ENCODE measurements at regions of chr12 and their contacts with region 1.

Region 1: DNA sequence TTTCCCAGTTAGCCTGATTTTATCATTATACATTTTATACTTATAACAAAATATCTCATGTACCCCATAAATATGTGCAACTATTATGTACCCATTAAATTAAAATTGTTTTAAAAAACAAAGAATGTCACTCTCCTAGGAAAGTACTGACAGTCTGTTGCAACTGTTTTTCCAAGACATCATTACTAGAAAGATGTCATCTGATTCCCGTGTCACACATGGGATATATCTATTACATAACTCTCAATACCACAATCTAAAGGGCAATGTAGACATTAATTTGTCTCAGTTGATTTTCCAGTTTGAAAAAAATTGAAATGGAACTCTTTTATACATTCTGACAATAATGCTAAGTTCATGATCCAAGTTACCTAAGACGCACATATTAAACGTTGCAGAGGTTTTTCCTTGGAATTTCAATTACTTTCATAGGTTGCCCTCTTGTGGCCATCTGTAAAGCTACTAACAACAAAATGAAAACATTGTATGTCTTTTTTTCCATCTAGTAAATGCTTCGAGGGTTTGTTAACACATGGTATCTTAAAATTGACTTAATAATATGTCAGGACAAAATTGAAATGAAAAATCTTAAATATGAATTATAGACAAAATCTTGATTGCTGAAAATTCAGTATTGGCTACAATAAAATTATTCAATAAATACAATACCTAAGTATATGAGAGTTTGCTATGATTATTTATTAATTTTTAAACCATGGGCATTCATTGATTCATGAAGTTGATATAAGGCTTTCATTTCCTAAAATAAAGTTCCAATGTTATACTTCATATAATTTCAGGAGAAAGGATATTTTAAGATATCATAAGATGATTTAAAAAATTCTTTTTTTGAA is 131.6 kb downstream of the PPFIA2 start:
- DNase-seq: no peak
- ATAC-seq: no peak
- H3K4me3 ChIP-seq: no peak overlapping the region
- H3K4me3 Mint-ChIP-seq: no peak overlapping the region
- H3K27ac ChIP-seq: no peak overlapping the region
- H3K27ac Mint-ChIP-seq: no peak overlapping the region
- H3K4me1 ChIP-seq: no peaks in the 10 kb centered on the region
- H3K4me1 Mint-ChIP-seq: no peaks in the 10 kb centered on the region
- H3K27me3 ChIP-seq: no peaks in the 10 kb centered on the region
- H3K27me3 Mint-ChIP-seq: peaks cover 0 to 5% (median 3%) of the 10 kb centered on the region in 5 donors

Region 2: GRCh38 chr12:81314903-81315531 is 312.5 kb before region 1 on chr12:
- CTCF ChIA-PET with region 1: no interaction called
- POLR2A ChIA-PET with region 1: no interaction called
- intact Hi-C with region 1: no loop called
- DNase-seq: no peak
- ATAC-seq: no peak
- H3K4me3 ChIP-seq: no peak overlapping the region
- H3K4me3 Mint-ChIP-seq: no peak overlapping the region
- H3K27ac ChIP-seq: no peak overlapping the region
- H3K27ac Mint-ChIP-seq: no peak overlapping the region
- H3K4me1 ChIP-seq: no peaks in the 10 kb centered on the region
- H3K4me1 Mint-ChIP-seq: no peaks in the 10 kb centered on the region
- H3K27me3 ChIP-seq: no peaks in the 10 kb centered on the region
- H3K27me3 Mint-ChIP-seq: no peaks in the 10 kb centered on the region

Region 3: GRCh38 chr12:81450920-81451739 is 176.4 kb before region 1 on chr12:
- CTCF ChIA-PET with region 1: no interaction called
- POLR2A ChIA-PET with region 1: no interaction called
- intact Hi-C with region 1: loop called in 1 of 2 experiments (anchors 5 kb)
- DNase-seq: no peak
- ATAC-seq: no peak
- H3K4me3 ChIP-seq: no peak overlapping the region
- H3K4me3 Mint-ChIP-seq: no peak overlapping the region
- H3K27ac ChIP-seq: no peak overlapping the region
- H3K27ac Mint-ChIP-seq: no peak overlapping the region
- H3K4me1 ChIP-seq: no peaks in the 10 kb centered on the region
- H3K4me1 Mint-ChIP-seq: no peaks in the 10 kb centered on the region
- H3K27me3 ChIP-seq: no peaks in the 10 kb centered on the region
- H3K27me3 Mint-ChIP-seq: no peaks in the 10 kb centered on the region

Region 4: DNA sequence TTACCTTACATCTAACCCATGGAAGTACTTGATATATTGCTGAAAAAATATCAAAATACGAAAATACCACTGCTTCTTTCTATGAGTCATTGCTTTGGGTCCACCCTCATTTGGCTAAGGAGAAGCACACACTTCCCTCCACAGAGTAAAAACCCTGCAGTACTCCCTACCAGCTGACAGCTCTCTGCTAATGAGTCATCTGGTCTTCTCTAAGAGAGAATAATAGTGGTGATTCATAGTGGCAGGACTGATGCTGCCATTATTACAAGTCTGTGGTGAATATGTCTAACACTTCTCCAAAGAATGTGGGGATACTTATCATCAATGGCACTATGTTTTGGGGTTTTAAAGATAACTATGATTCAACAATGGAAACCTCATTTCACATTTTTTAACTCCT is 40.9 kb after region 1 on chr12:
- CTCF ChIA-PET with region 1: no interaction called
- POLR2A ChIA-PET with region 1: no interaction called
- intact Hi-C with region 1: no loop called
- DNase-seq: no peak
- ATAC-seq: no peak
- H3K4me3 ChIP-seq: no peak overlapping the region
- H3K4me3 Mint-ChIP-seq: no peak overlapping the region
- H3K27ac ChIP-seq: no peak overlapping the region
- H3K27ac Mint-ChIP-seq: no peak overlapping the region
- H3K4me1 ChIP-seq: no peaks in the 10 kb centered on the region
- H3K4me1 Mint-ChIP-seq: no peaks in the 10 kb centered on the region
- H3K27me3 ChIP-seq: no peaks in the 10 kb centered on the region
- H3K27me3 Mint-ChIP-seq: no peaks in the 10 kb centered on the region